ENCODE measurements at regions of chr15 and their contacts with region 1.

Region 1: GRCh38 chr15:38707802-38708671 is 143.4 kb upstream of the RASGRP1 start:
- DNase-seq: peak; percentile 48
- ATAC-seq: peak; percentile 91
- H3K4me3 Mint-ChIP-seq: no peak overlapping the region
- H3K27ac Mint-ChIP-seq: no peak overlapping the region
- H3K4me1 Mint-ChIP-seq: peaks cover 7% of the 10 kb centered on the region
- H3K27me3 Mint-ChIP-seq: no peaks in the 10 kb centered on the region

Region 2: GRCh38 chr15:38474155-38474757 is 233.8 kb before region 1 on chr15:
- CTCF ChIA-PET with region 1: interaction called, 11 read pairs
- POLR2A ChIA-PET with region 1: no interaction called
- intact Hi-C with region 1: no loop called
- DNase-seq: peak; percentile 30
- ATAC-seq: peak; percentile 97
- H3K4me3 Mint-ChIP-seq: no peak overlapping the region
- H3K27ac Mint-ChIP-seq: no peak overlapping the region
- H3K4me1 Mint-ChIP-seq: peaks cover 11% of the 10 kb centered on the region
- H3K27me3 Mint-ChIP-seq: no peaks in the 10 kb centered on the region

Region 3: DNA sequence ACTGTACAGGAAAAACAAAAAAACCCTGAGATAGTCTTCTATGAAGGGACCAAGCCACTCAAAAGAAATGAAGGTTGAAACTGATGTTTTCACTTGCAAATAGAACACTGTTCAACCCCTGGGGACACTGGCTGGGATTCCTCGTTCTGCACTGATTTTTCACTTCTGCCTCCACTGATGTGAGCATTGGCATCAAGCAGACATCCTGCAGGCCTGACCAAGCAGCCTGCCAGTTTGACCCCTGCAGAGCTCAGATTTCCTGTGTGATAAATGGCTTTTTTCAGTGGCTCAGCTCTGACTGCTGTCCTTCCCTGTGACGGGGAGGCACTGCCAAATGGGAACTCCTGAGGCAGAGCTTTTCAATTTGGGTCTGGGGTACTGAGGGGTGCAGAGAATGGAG is 193.4 kb before region 1 on chr15:
- CTCF ChIA-PET with region 1: no interaction called
- POLR2A ChIA-PET with region 1: no interaction called
- intact Hi-C with region 1: no loop called
- DNase-seq: no peak
- ATAC-seq: no peak
- H3K4me3 Mint-ChIP-seq: no peak overlapping the region
- H3K27ac Mint-ChIP-seq: peak overlapping the region; percentile 42
- H3K4me1 Mint-ChIP-seq: peaks cover 38% of the 10 kb centered on the region
- H3K27me3 Mint-ChIP-seq: no peaks in the 10 kb centered on the region

Region 4: GRCh38 chr15:38636597-38636996 is 71.4 kb before region 1 on chr15:
- CTCF ChIA-PET with region 1: no interaction called
- POLR2A ChIA-PET with region 1: no interaction called
- intact Hi-C with region 1: no loop called
- DNase-seq: no peak
- ATAC-seq: no peak
- H3K4me3 Mint-ChIP-seq: no peak overlapping the region
- H3K27ac Mint-ChIP-seq: no peak overlapping the region
- H3K4me1 Mint-ChIP-seq: peaks cover 41% of the 10 kb centered on the region
- H3K27me3 Mint-ChIP-seq: no peaks in the 10 kb centered on the region

Region 5: DNA sequence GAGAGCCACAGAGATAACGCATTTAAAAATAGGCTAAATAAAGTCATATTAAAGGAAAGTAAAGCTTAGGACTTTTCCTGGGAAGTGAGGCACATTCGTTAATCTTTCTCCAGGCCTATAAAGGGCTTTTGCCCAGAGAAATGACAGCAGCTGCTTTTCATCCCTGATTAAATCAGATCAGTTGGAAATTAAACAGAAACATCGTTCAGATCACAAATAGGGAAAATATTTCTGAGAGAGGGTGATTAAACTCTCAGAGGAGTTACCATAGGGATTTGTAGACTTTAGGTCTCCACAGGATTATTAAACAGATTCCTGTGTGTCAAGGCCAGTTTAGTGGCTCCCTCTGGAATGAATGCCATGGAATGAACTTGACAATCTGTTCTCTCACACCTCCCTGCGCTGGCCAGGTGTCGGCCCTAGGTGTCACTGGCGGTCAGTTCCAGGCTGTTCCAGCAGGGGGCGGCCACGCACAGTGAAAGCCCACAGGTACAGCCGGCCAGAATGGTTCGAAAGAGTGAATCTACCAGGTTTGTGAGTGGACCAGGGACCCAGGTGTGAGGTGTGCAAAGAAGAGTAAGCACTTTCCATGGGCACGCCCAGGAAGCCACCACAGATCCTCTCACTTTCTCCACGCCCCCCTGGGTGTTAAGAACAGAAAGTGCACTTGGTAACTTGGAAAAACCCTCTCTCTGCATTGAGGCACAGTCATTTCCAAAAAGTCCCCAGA is 109.6 kb after region 1 on chr15:
- CTCF ChIA-PET with region 1: interaction called, 5 read pairs
- POLR2A ChIA-PET with region 1: no interaction called
- intact Hi-C with region 1: loop called in 1 of 2 experiments (anchors 5 kb)
- DNase-seq: peak; percentile 90
- ATAC-seq: peak; percentile 96
- H3K4me3 Mint-ChIP-seq: no peak overlapping the region
- H3K27ac Mint-ChIP-seq: no peak overlapping the region
- H3K4me1 Mint-ChIP-seq: peaks cover 5% of the 10 kb centered on the region
- H3K27me3 Mint-ChIP-seq: peaks cover 8% of the 10 kb centered on the region

Region 6: GRCh38 chr15:38868326-38869114 is 160.5 kb after region 1 on chr15:
- CTCF ChIA-PET with region 1: no interaction called
- POLR2A ChIA-PET with region 1: no interaction called
- intact Hi-C with region 1: loop called in 1 of 2 experiments (anchors 5 kb)
- DNase-seq: no peak
- ATAC-seq: no peak
- H3K4me3 Mint-ChIP-seq: no peak overlapping the region
- H3K27ac Mint-ChIP-seq: no peak overlapping the region
- H3K4me1 Mint-ChIP-seq: no peaks in the 10 kb centered on the region
- H3K27me3 Mint-ChIP-seq: peaks cover 4% of the 10 kb centered on the region

Region 7: GRCh38 chr15:39517122-39517855 is 809.3 kb after region 1 on chr15:
- CTCF ChIA-PET with region 1: no interaction called
- POLR2A ChIA-PET with region 1: no interaction called
- intact Hi-C with region 1: no loop called
- DNase-seq: no peak
- ATAC-seq: no peak
- H3K4me3 Mint-ChIP-seq: no peak overlapping the region
- H3K27ac Mint-ChIP-seq: no peak overlapping the region
- H3K4me1 Mint-ChIP-seq: no peaks in the 10 kb centered on the region
- H3K27me3 Mint-ChIP-seq: peaks cover 14% of the 10 kb centered on the region

Measured in activated CD4-positive, alpha-beta T cell treated with anti-CD3 and anti-CD28 coated beads for 36 hours (primary cell).